ENCODE measurements at regions of chr22 and their contacts with region 1.

Region 1: GRCh38 chr22:30212363-30212995 is 34.1 kb downstream of the LIF start:
- DNase-seq: peak; percentile 95
- ATAC-seq: peak; percentile 62
- H3K4me3 ChIP-seq: no peak overlapping the region
- H3K27ac ChIP-seq: peak overlapping the region; percentile 47
- H3K4me1 ChIP-seq: peaks cover 30% of the 10 kb centered on the region
- H3K27me3 ChIP-seq: no peaks in the 10 kb centered on the region
- CTCF ChIP-seq: peak; percentile 32
- POLR2A ChIP-seq: no peak
- RAD21 ChIP-seq: 0 out of 2 replicates have a peak, but pooled peaks have one; percentile 34

Region 2: DNA sequence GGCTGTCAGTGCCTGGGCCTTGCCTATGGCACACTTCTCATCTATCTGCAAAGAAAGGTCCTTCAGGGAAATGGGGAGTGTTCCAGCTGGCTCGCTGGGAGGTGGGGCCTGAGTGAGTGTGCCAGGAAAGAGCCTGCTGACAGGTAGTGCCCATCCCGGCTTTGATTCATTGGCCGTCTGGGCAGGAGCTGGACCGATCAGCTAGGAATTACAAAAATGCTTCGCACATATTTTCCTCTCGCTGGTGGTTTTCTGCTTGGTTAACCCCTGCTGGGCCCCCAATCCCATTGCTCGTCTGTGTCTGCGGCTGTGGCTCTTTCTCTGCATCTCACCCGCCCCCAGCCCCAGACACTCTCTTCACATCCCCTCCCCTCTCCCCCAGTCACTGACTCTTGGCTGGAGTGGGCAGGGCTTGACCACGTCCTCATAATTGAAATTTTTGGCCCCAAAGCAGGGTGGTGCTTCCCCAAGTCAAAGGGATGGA is 23.2 kb after region 1 on chr22:
- CTCF ChIA-PET with region 1: no interaction called
- POLR2A ChIA-PET with region 1: interaction called, 18 read pairs
- dilution Hi-C with region 1: no loop called
- in situ Hi-C with region 1: no loop called
- intact Hi-C with region 1: loop called (anchors 1 kb)
- DNase-seq: peak; percentile 88
- ATAC-seq: peak; percentile 61
- H3K4me3 ChIP-seq: no peak overlapping the region
- H3K27ac ChIP-seq: peak overlapping the region; percentile 91
- H3K4me1 ChIP-seq: peaks cover 35% of the 10 kb centered on the region
- H3K27me3 ChIP-seq: no peaks in the 10 kb centered on the region
- CTCF ChIP-seq: no peak
- POLR2A ChIP-seq: no peak
- RAD21 ChIP-seq: no peak

Measured in IMR-90 (cell line).